Posterior vena cava (tissue), 2 donors: ENCODE measurements at regions of chr1 and their contacts with region 1.

Region 1: GRCh38 chr1:59375321-59376220 is 78.7 kb downstream of the FGGY start:
- DNase-seq: no peak

Region 2: GRCh38 chr1:59438058-59438560 is 62.5 kb after region 1 on chr1:
- intact Hi-C with region 1: loop called in 1 of 2 experiments (anchors 2 kb)
- DNase-seq: no peak

Region 3: DNA sequence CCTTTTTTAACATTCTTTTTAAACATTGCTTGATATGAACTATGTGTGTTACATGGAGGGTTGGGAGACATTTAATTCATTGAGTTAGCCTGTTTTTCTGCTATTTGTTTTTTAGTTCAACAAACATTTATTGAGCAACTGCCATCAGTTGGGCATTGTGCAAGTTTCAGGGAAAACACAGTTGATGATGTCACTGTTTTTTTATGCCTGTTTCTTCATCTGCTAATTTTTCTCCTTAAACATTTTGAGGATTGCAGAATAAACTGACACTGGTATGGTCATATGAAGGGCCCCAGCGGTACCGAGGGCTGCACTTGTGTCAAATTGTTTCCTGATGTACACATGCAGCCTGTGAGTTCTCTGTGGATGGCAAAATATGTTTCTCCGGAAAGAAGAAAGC is 174.3 kb after region 1 on chr1:
- intact Hi-C with region 1: no loop called
- DNase-seq: peak; percentile 81